Activated CD4-positive, alpha-beta memory T cell treated with anti-CD3 and anti-CD28 coated beads for 36 hours (primary cell): ENCODE measurements at regions of chrX and their contacts with region 1.

Region 1: DNA sequence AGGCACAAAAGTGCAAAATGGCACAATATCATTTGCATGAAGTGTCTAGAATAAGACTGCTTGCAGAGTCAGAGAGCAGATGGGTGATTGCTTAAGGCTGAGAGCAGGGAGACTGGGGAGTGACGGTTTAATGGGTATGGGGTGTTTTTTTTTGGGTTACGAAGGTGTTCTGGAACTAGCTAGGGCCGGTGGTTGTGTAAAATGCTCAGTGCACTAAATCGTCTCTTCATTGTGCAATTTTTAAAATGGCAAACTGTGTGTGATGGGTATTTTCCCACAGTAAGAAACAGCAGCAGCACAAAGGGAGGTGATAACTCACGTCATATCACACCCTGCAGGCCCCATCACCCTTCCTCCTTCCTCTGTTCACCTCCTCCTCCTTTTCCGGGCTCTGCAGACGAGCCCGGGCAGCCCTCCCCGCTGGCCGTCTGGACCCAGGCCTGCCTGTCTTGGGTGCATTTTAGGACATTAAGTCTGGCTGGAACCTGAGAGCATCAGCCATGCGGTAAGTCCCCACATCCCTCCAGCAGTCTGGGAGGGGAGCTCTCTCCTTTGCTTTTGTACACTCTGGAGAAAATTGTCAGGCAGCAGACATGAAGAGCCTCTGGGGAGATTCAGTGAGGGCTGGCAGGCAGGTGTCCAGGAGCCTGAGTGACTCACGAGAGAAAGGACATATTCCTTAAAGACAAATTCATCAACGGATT is 42.7 kb downstream of the ASMT start:
- DNase-seq: peak; percentile 82
- H3K4me3 Mint-ChIP-seq: peak overlapping the region; percentile 97
- H3K27ac Mint-ChIP-seq: peak overlapping the region; percentile 100
- H3K4me1 Mint-ChIP-seq: peaks cover 27% of the 10 kb centered on the region
- H3K27me3 Mint-ChIP-seq: no peaks in the 10 kb centered on the region

Region 2: GRCh38 chrX:318739-319578 is 1338.6 kb before region 1 on chrX and contains the start of gene GTPBP6:
- CTCF ChIA-PET with region 1: no interaction called
- POLR2A ChIA-PET with region 1: no interaction called
- intact Hi-C with region 1: loop called (anchors 2 kb)
- DNase-seq: peak; percentile 99
- H3K4me3 Mint-ChIP-seq: peak within 1 kb of the TSS; percentile 91
- H3K27ac Mint-ChIP-seq: peak within 1 kb of the TSS; percentile 99
- H3K4me1 Mint-ChIP-seq: peaks cover 23% of the 10 kb centered on the region
- H3K27me3 Mint-ChIP-seq: no peaks in the 10 kb centered on the region
- total RNA-seq, gene GTPBP6: 60.0 to 62.4 TPM

Region 3: GRCh38 chrX:1453951-1454785 is 203.4 kb before region 1 on chrX:
- CTCF ChIA-PET with region 1: no interaction called
- POLR2A ChIA-PET with region 1: no interaction called
- intact Hi-C with region 1: loop called (anchors 1 kb)
- DNase-seq: peak; percentile 95
- H3K4me3 Mint-ChIP-seq: peak overlapping the region; percentile 52
- H3K27ac Mint-ChIP-seq: peak overlapping the region; percentile 64
- H3K4me1 Mint-ChIP-seq: peaks cover 19% of the 10 kb centered on the region
- H3K27me3 Mint-ChIP-seq: no peaks in the 10 kb centered on the region

Region 4: DNA sequence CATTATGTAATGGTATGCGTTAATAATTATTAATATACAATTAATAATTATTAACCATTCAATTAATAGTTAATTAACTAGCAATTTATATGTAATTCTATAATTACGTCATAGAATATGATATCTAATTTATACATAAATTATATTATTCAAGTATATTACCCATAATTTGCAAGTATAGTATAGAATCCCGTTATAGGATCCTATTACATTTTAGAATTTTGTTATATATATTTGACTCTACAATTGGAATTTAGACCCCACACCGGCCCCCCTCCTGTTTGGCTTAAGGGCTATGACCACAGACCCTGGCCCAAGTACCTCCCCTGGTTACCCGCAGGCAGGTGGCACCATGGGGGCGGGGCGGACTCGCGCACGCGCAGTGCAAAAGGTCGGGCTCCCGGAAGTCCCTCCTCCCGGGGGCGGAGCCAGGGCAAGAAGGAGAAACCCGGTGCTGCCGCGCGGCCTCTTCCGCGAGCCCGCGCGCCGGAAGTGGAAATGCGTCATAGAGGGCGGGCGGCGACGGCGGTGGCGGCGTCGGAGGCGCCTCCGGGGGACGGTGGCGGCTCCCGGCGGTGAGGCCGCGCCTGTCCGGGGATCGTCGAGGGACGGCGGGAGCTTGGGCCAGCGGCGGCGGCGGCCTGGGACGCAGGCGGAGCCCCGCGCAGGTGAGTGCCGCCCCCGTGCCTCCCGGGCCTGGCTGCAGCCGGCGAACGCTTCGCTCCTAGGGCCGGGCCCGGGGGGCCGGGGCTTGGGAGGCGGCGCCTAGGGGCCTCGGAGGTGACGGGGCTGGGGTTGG is 66.2 kb before region 1 on chrX and contains the start of gene AKAP17A:
- CTCF ChIA-PET with region 1: no interaction called
- POLR2A ChIA-PET with region 1: no interaction called
- intact Hi-C with region 1: loop called (anchors 1 kb)
- DNase-seq: peak; percentile 99
- H3K4me3 Mint-ChIP-seq: peak within 1 kb of the TSS; percentile 92
- H3K27ac Mint-ChIP-seq: peak within 1 kb of the TSS; percentile 89
- H3K4me1 Mint-ChIP-seq: peaks cover 31% of the 10 kb centered on the region
- H3K27me3 Mint-ChIP-seq: no peaks in the 10 kb centered on the region
- total RNA-seq, gene AKAP17A: 59.4 to 62.9 TPM

Region 5: GRCh38 chrX:2500267-2501075 is 843.0 kb after region 1 on chrX and contains the starts of genes DHRSX and ZBED1:
- CTCF ChIA-PET with region 1: no interaction called
- POLR2A ChIA-PET with region 1: no interaction called
- intact Hi-C with region 1: loop called (anchors 5 kb)
- DNase-seq: peak; percentile 66
- H3K4me3 Mint-ChIP-seq: peak within 1 kb of the TSS; percentile 78
- H3K27ac Mint-ChIP-seq: peak within 1 kb of the TSS; percentile 70
- H3K4me1 Mint-ChIP-seq: peaks cover 27% of the 10 kb centered on the region
- H3K27me3 Mint-ChIP-seq: no peaks in the 10 kb centered on the region
- total RNA-seq, gene DHRSX: 20.7 to 21.3 TPM
- total RNA-seq, gene ZBED1: 22.5 to 25.3 TPM

Region 6: GRCh38 chrX:2627272-2627867 is 969.9 kb after region 1 on chrX:
- CTCF ChIA-PET with region 1: no interaction called
- POLR2A ChIA-PET with region 1: no interaction called
- intact Hi-C with region 1: loop called (anchors 1 kb)
- DNase-seq: peak; percentile 60
- H3K4me3 Mint-ChIP-seq: no peak overlapping the region
- H3K27ac Mint-ChIP-seq: peak overlapping the region; percentile 10
- H3K4me1 Mint-ChIP-seq: peaks cover 34% of the 10 kb centered on the region
- H3K27me3 Mint-ChIP-seq: no peaks in the 10 kb centered on the region